Mammary epithelial cell (primary cell): ENCODE measurements at regions of chr19 and their contacts with region 1.

Region 1: GRCh38 chr19:23971598-23971997 is 56.9 kb downstream of the ZNF726 start:
- DNase-seq: no peak
- H3K4me3 ChIP-seq: no peak overlapping the region
- H3K27ac ChIP-seq: no peak overlapping the region
- H3K4me1 ChIP-seq: no peaks in the 10 kb centered on the region
- H3K27me3 ChIP-seq: peaks cover 4% of the 10 kb centered on the region
- CTCF ChIP-seq: no peak

Region 2: GRCh38 chr19:23470873-23471545 is 500.6 kb before region 1 on chr19:
- CTCF ChIA-PET with region 1: no interaction called
- dilution Hi-C with region 1: no loop called
- in situ Hi-C with region 1: loop called in 1 of 2 experiments (anchors 5 kb)
- intact Hi-C with region 1: no loop called
- DNase-seq: no peak
- H3K4me3 ChIP-seq: peak overlapping the region; percentile 27 to 31 (median 29)
- H3K27ac ChIP-seq: no peak overlapping the region
- H3K4me1 ChIP-seq: peaks cover 3% of the 10 kb centered on the region
- H3K27me3 ChIP-seq: peaks cover 2% of the 10 kb centered on the region
- CTCF ChIP-seq: no peak